ENCODE measurements at regions of chr14 and their contacts with region 1.

Region 1: GRCh38 chr14:69726761-69727511 is 40.0 kb upstream of the SRSF5 start:
- DNase-seq: peak; percentile 83 to 88
- ATAC-seq: peak; percentile 94 to 97 (median 96)
- H3K4me3 ChIP-seq: peak overlapping the region in 9 of 10 donors; percentile 33 to 54 (median 45)
- H3K27ac ChIP-seq: peak overlapping the region; percentile 31 to 89 (median 72)
- H3K4me1 ChIP-seq: peaks cover 0 to 41% (median 16%) of the 10 kb centered on the region in 9 donors
- H3K27me3 ChIP-seq: no peaks in the 10 kb centered on the region
- CTCF ChIP-seq: peak; percentile 93 to 100 (median 98)

Region 2: GRCh38 chr14:69535230-69535848 is 191.6 kb before region 1 on chr14:
- intact Hi-C with region 1: loop called in 1 of 10 experiments (anchors 5 kb)
- DNase-seq: peak in 1 of 2 donors; percentile 18
- ATAC-seq: peak in 2 of 8 donors; percentile 34 to 37
- H3K4me3 ChIP-seq: no peak overlapping the region
- H3K27ac ChIP-seq: no peak overlapping the region
- H3K4me1 ChIP-seq: peaks cover 0 to under 1% (median 0%) of the 10 kb centered on the region in 9 donors
- H3K27me3 ChIP-seq: peaks cover 0 to 36% (median 19%) of the 10 kb centered on the region in 7 donors
- CTCF ChIP-seq: peak; percentile 8 to 72 (median 58)

Region 3: GRCh38 chr14:69580009-69580577 is 146.8 kb before region 1 on chr14:
- intact Hi-C with region 1: loop called (anchors 1 to 5 kb)
- DNase-seq: no peak
- ATAC-seq: peak in 6 of 8 donors; percentile 21 to 87 (median 40)
- H3K4me3 ChIP-seq: no peak overlapping the region
- H3K27ac ChIP-seq: no peak overlapping the region
- H3K4me1 ChIP-seq: peaks cover 0 to 8% (median 0%) of the 10 kb centered on the region in 9 donors
- H3K27me3 ChIP-seq: peaks cover 3 to 40% (median 29%) of the 10 kb centered on the region in 7 donors
- CTCF ChIP-seq: peak in 7 of 9 donors; percentile 27 to 51 (median 41)

Region 4: GRCh38 chr14:69586404-69586803 is 140.5 kb before region 1 on chr14:
- intact Hi-C with region 1: loop called (anchors 1 to 5 kb)
- DNase-seq: no peak
- ATAC-seq: peak in 5 of 8 donors; percentile 29 to 58 (median 44)
- H3K4me3 ChIP-seq: no peak overlapping the region
- H3K27ac ChIP-seq: peak overlapping the region in 4 of 10 donors; percentile 22 to 71 (median 44)
- H3K4me1 ChIP-seq: peaks cover 0 to 36% (median 14%) of the 10 kb centered on the region in 9 donors
- H3K27me3 ChIP-seq: no peaks in the 10 kb centered on the region
- CTCF ChIP-seq: no peak

Region 5: GRCh38 chr14:69600304-69600891 is 126.5 kb before region 1 on chr14:
- intact Hi-C with region 1: loop called in 9 of 10 experiments (anchors 1 to 5 kb)
- DNase-seq: no peak
- ATAC-seq: no peak
- H3K4me3 ChIP-seq: no peak overlapping the region
- H3K27ac ChIP-seq: no peak overlapping the region
- H3K4me1 ChIP-seq: no peaks in the 10 kb centered on the region
- H3K27me3 ChIP-seq: no peaks in the 10 kb centered on the region
- CTCF ChIP-seq: no peak

Region 6: GRCh38 chr14:69605738-69606137 is 121.2 kb before region 1 on chr14:
- intact Hi-C with region 1: loop called in 9 of 10 experiments (anchors 1 to 5 kb)
- DNase-seq: no peak
- ATAC-seq: no peak
- H3K4me3 ChIP-seq: no peak overlapping the region
- H3K27ac ChIP-seq: no peak overlapping the region
- H3K4me1 ChIP-seq: peaks cover 2 to 24% (median 10%) of the 10 kb centered on the region in 9 donors
- H3K27me3 ChIP-seq: no peaks in the 10 kb centered on the region
- CTCF ChIP-seq: no peak

Measured in heart right ventricle (tissue), 16 donors.